ENCODE measurements at regions of chr1 and their contacts with region 1.

Region 1: DNA sequence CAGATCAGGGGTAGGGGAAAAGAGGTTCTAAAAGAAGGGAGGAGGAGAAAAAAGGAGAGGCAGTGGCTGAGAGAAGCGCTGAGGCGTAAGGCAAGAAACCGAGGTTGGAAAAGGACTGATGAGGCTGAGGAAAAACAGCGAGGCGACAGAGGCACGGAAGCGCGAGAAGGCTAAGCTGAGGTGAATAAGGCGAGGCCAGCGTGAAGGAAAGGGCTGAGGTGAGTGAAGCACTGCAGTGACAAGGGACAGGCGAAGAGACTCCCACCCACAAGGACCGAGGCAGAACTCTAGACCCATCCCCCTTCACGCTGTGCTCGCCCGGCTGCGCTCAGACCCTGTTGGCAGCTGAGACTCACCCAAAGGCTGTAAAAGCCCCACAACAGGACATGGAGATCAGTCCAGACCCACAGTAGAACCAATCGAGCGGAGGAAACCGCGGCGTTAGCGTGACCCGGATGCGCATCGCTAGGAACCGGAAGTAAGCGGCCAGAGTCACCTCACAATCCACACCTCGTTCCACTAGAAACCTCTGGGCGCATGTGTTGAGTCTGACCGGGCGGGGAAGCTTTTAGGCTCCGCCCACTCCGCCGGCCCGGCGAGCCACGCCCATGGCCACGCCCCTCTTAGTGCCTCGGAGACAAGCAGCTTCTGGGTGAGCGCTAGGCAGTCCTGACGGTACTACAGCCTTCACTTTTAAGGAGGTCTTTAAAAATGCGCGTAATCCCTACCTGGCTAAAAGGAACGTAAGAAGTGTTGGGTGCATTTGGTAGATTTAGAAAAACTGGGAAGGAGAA is at the start of gene EYA3:
- DNase-seq: peak; percentile 96 to 99 (median 99)
- ATAC-seq: peak; percentile 99
- H3K4me3 ChIP-seq: peak within 1 kb of the TSS; percentile 92
- H3K4me3 Mint-ChIP-seq: peak within 1 kb of the TSS; percentile 93 to 98 (median 97)
- H3K27ac ChIP-seq: peak within 1 kb of the TSS; percentile 82
- H3K27ac Mint-ChIP-seq: peak within 1 kb of the TSS; percentile 89 to 98 (median 94)
- H3K4me1 ChIP-seq: peaks cover 11 to 12% of the 10 kb centered on the region in 2 donors
- H3K4me1 Mint-ChIP-seq: peaks cover 30 to 56% (median 42%) of the 10 kb centered on the region in 7 donors
- H3K27me3 ChIP-seq: no peaks in the 10 kb centered on the region
- H3K27me3 Mint-ChIP-seq: peaks cover 0 to 8% (median 0%) of the 10 kb centered on the region in 5 donors
- total RNA-seq, gene EYA3: 14.5 to 31.7 (median 19.2) TPM

Region 2: GRCh38 chr1:27725374-27726173 is 362.8 kb before region 1 on chr1 and contains the start of gene FAM76A:
- CTCF ChIA-PET with region 1: no interaction called
- POLR2A ChIA-PET with region 1: no interaction called
- intact Hi-C with region 1: loop called (anchors 1 to 2 kb)
- DNase-seq: peak; percentile 97 to 100 (median 99)
- ATAC-seq: peak; percentile 97
- H3K4me3 ChIP-seq: peak within 1 kb of the TSS; percentile 77
- H3K4me3 Mint-ChIP-seq: peak within 1 kb of the TSS; percentile 86 to 93 (median 90)
- H3K27ac ChIP-seq: peak within 1 kb of the TSS; percentile 91
- H3K27ac Mint-ChIP-seq: peak within 1 kb of the TSS; percentile 93 to 100 (median 98)
- H3K4me1 ChIP-seq: peaks cover 7 to 17% of the 10 kb centered on the region in 2 donors
- H3K4me1 Mint-ChIP-seq: peaks cover 9 to 35% (median 28%) of the 10 kb centered on the region in 7 donors
- H3K27me3 ChIP-seq: no peaks in the 10 kb centered on the region
- H3K27me3 Mint-ChIP-seq: no peaks in the 10 kb centered on the region
- total RNA-seq, gene FAM76A: 15.2 to 25.2 (median 22.2) TPM

Region 3: GRCh38 chr1:27858072-27858958 is 230.1 kb before region 1 on chr1:
- CTCF ChIA-PET with region 1: no interaction called
- POLR2A ChIA-PET with region 1: no interaction called
- intact Hi-C with region 1: loop called (anchors 1 to 2 kb)
- DNase-seq: peak; percentile 71 to 86 (median 80)
- ATAC-seq: peak; percentile 97
- H3K4me3 ChIP-seq: no peak overlapping the region
- H3K4me3 Mint-ChIP-seq: peak overlapping the region in 6 of 10 donors; percentile 14 to 61 (median 40)
- H3K27ac ChIP-seq: no peak overlapping the region
- H3K27ac Mint-ChIP-seq: peak overlapping the region in 5 of 9 donors; percentile 33 to 78 (median 74)
- H3K4me1 ChIP-seq: peaks cover 0 to 11% of the 10 kb centered on the region in 2 donors
- H3K4me1 Mint-ChIP-seq: peaks cover 7 to 36% (median 28%) of the 10 kb centered on the region in 7 donors
- H3K27me3 ChIP-seq: no peaks in the 10 kb centered on the region
- H3K27me3 Mint-ChIP-seq: no peaks in the 10 kb centered on the region

Region 4: GRCh38 chr1:28172713-28173150 is 84.4 kb after region 1 on chr1:
- CTCF ChIA-PET with region 1: no interaction called
- POLR2A ChIA-PET with region 1: no interaction called
- intact Hi-C with region 1: loop called in 1 of 2 experiments (anchors 1 kb)
- DNase-seq: peak in 7 of 9 donors; percentile 8 to 55 (median 21)
- ATAC-seq: peak; percentile 60
- H3K4me3 ChIP-seq: no peak overlapping the region
- H3K4me3 Mint-ChIP-seq: peak overlapping the region; percentile 34 to 85 (median 60)
- H3K27ac ChIP-seq: no peak overlapping the region
- H3K27ac Mint-ChIP-seq: peak overlapping the region in 4 of 9 donors; percentile 2 to 66 (median 10)
- H3K4me1 ChIP-seq: peaks cover 36 to 41% of the 10 kb centered on the region in 2 donors
- H3K4me1 Mint-ChIP-seq: peaks cover 39 to 55% (median 50%) of the 10 kb centered on the region in 7 donors
- H3K27me3 ChIP-seq: no peaks in the 10 kb centered on the region
- H3K27me3 Mint-ChIP-seq: peaks cover 0 to 64% (median 0%) of the 10 kb centered on the region in 5 donors

Region 5: GRCh38 chr1:28329395-28330153 is 241.2 kb after region 1 on chr1:
- CTCF ChIA-PET with region 1: no interaction called
- POLR2A ChIA-PET with region 1: no interaction called
- intact Hi-C with region 1: loop called (anchors 1 kb)
- DNase-seq: peak in 2 of 9 donors; percentile 32 to 48
- ATAC-seq: peak; percentile 14
- H3K4me3 ChIP-seq: peak overlapping the region; percentile 59
- H3K4me3 Mint-ChIP-seq: peak overlapping the region; percentile 89 to 98 (median 92)
- H3K27ac ChIP-seq: peak overlapping the region; percentile 86
- H3K27ac Mint-ChIP-seq: peak overlapping the region; percentile 92 to 100 (median 98)
- H3K4me1 ChIP-seq: peaks cover 13 to 14% of the 10 kb centered on the region in 2 donors
- H3K4me1 Mint-ChIP-seq: peaks cover 20 to 40% (median 39%) of the 10 kb centered on the region in 7 donors
- H3K27me3 ChIP-seq: no peaks in the 10 kb centered on the region
- H3K27me3 Mint-ChIP-seq: peaks cover 0 to 3% (median 0%) of the 10 kb centered on the region in 5 donors

Region 6: GRCh38 chr1:28581536-28582247 is 493.3 kb after region 1 on chr1:
- CTCF ChIA-PET with region 1: no interaction called
- POLR2A ChIA-PET with region 1: interaction called, 5 read pairs
- intact Hi-C with region 1: loop called in 1 of 2 experiments (anchors 1 kb)
- DNase-seq: peak; percentile 85 to 96 (median 91)
- ATAC-seq: peak; percentile 95
- H3K4me3 ChIP-seq: peak overlapping the region; percentile 93
- H3K4me3 Mint-ChIP-seq: peak overlapping the region; percentile 94 to 99 (median 97)
- H3K27ac ChIP-seq: peak overlapping the region; percentile 84
- H3K27ac Mint-ChIP-seq: peak overlapping the region; percentile 86 to 96 (median 93)
- H3K4me1 ChIP-seq: peaks cover 20 to 23% of the 10 kb centered on the region in 2 donors
- H3K4me1 Mint-ChIP-seq: peaks cover 22 to 48% (median 37%) of the 10 kb centered on the region in 7 donors
- H3K27me3 ChIP-seq: no peaks in the 10 kb centered on the region
- H3K27me3 Mint-ChIP-seq: no peaks in the 10 kb centered on the region